HAP-1 (cell line): ENCODE measurements at regions of chr4 and their contacts with region 1.

Region 1: DNA sequence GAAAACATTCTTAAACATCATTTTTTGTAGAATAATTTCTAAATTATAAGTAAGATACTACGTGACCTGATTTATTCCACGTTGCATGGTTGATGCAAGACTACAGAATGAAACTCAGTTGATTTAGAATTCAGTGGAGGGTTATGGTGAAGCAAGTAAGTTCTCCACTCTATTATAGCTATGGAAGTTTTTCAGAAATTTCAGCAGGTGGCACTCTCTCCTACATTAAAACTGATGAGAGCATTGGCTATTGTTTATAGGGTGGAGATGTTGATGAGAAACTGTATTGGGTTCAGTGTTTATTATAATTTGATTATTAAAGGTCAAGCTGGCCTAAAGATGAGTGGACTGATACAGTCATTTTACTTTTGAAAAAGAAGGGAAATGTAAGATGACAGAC is 88.0 kb downstream of the FNIP2 start:
- DNase-seq: peak in 1 of 2 experiments; percentile 78
- H3K4me3 ChIP-seq: no peak overlapping the region
- H3K4me1 ChIP-seq: no peaks in the 10 kb centered on the region
- H3K27me3 ChIP-seq: no peaks in the 10 kb centered on the region

Region 2: DNA sequence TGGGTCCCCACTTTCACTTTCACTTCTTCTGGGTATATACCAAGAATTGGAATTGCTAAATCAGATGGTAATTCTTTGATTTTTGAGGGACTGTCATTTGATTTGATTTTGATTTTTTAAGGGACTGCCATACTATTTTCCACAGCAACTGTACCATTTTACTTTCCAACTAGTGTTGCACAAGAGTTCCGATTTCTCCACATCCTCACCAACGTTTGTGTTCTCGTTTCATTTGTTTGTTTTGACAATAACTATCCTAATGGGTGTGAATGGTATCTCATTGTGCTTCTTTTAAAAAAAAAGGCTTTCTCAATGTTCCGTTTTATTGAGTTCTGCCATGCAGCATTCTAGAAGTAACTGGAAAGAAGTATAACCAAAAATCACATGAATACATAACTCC is 247.7 kb before region 1 on chr4:
- in situ Hi-C with region 1: no loop called
- DNase-seq: no peak
- H3K4me3 ChIP-seq: no peak overlapping the region
- H3K4me1 ChIP-seq: no peaks in the 10 kb centered on the region
- H3K27me3 ChIP-seq: no peaks in the 10 kb centered on the region

Region 3: DNA sequence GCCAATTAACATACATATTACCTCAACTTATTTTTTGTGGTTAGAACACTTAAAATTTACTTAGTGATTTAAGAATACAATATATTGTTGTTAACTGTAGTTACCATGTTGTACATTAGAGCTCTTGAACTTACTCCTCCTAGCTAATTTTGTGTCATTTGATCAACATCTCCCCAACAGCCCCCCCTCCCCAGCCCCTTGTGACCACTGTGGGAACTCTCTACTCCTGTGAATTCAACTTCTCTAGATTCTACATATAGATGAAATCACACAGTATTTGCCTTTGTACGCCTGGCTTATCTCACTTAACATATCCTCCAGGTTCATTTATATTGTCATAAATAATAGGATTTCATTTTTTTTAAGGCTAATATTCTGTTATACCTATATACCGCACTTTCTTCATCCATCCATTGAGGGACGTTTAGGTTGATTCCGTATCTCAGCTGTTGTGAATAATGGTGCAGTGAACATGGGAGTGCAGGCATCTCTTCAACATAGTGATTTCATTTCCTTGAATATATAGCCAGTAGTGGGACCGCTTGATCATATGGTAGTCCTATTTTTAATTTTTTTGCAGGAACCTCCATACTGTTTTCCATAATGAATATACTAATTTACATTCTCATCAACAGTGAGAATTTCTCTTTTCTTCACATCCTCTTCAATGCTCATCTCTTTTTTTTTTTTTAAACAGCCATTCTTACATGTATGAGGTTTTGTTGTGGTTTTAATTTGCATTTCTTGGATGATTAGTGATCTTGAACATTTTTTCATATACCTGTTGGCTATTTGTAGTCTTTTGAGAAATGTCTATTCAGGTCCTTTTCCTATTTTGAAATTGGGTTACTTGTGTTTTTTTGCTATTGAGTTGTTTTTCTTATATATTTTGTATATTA is 312.8 kb after region 1 on chr4:
- in situ Hi-C with region 1: loop called (anchors 10 kb)
- DNase-seq: no peak
- H3K4me3 ChIP-seq: no peak overlapping the region
- H3K4me1 ChIP-seq: no peaks in the 10 kb centered on the region
- H3K27me3 ChIP-seq: no peaks in the 10 kb centered on the region

Region 4: DNA sequence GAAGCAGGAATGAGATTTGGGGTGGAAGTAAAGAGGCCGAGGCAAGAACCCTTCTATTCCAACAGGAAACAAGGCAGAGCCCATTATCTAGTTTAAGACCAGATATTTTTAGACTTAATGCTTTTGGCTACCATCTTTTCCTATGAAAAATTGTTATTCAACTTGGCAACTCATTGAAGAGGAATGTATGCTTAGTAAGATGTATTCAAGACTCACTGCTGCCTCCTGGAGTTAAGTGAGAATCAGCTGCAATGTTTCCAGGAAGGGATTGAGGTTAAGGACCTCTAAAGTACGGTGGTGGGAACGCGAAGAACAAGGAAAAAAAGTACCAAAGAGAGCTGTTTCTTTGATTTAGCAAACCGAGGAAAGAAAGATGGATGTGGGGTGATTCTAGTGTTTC is 335.1 kb after region 1 on chr4:
- in situ Hi-C with region 1: loop called (anchors 10 kb)
- DNase-seq: peak; percentile 31 to 40
- H3K4me3 ChIP-seq: no peak overlapping the region
- H3K4me1 ChIP-seq: peaks cover under 1% of the 10 kb centered on the region; the same call in 1 of the 2 replicates
- H3K27me3 ChIP-seq: no peaks in the 10 kb centered on the region

Region 5: GRCh38 chr4:159446266-159446976 is 589.6 kb after region 1 on chr4:
- in situ Hi-C with region 1: loop called (anchors 10 kb)
- DNase-seq: peak; percentile 56 to 70
- H3K4me3 ChIP-seq: no peak overlapping the region
- H3K4me1 ChIP-seq: peaks cover 4% of the 10 kb centered on the region
- H3K27me3 ChIP-seq: peaks cover 2% of the 10 kb centered on the region; the same call in 1 of the 2 replicates